OCI-LY7 (cell line): ENCODE measurements at regions of chr14 and their contacts with region 1.

Region 1: DNA sequence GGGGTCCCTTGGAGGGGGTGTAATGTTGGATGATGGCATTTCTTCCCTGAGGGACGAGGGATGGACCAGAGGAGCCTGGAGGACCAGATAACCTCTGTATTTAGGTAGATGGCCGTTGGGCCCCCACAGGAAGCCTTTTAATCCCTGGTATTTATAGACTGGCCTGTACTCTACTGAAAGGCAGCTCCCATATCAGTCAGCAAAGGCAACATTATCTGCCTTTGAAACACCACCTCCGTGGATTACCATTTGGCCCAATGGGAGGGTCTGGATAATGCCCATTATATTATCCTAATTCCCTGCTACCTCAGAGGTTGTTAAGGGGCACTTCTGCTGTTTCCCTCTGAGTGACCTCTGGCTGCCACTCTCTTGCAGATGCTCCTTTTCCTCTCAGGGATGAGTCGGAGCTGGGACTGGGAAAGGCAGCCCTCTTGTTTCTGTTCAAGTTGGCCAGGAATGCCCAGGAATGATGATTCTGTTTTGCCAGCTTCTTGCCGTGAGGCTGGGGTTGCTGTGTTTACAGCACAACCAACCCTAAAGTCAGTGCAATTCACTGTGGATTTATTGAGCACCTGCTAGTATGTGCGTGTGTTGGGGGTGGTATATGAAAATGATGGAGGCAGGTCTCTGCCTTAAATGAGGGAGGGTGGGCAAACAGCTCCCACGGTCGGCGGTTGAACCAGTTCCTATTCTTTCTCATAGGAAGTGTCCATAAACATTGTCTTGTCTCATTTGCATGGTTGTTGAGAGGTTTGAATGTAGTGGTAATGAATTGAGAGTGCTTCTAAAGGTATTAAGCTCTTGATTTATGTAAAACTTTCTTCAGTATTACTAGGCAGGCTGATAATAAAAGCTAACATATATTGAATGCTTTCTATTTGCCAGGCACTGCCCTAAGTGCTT is 18.1 kb downstream of the SUSD6 start:
- DNase-seq: peak; percentile 65
- H3K4me3 ChIP-seq: peak overlapping the region; percentile 57
- H3K27ac ChIP-seq: peak overlapping the region; percentile 65
- H3K4me1 ChIP-seq: peaks cover 100% of the 10 kb centered on the region
- CTCF ChIP-seq: no peak

Region 2: GRCh38 chr14:69643443-69644164 is 14.1 kb after region 1 on chr14:
- CTCF ChIA-PET with region 1: interaction called, 3 read pairs
- POLR2A ChIA-PET with region 1: interaction called, 14 read pairs
- intact Hi-C with region 1: no loop called
- DNase-seq: no peak
- H3K4me3 ChIP-seq: no peak overlapping the region
- H3K27ac ChIP-seq: no peak overlapping the region
- H3K4me1 ChIP-seq: peaks cover 43% of the 10 kb centered on the region
- CTCF ChIP-seq: no peak

Region 3: GRCh38 chr14:69648477-69649451 is 19.3 kb after region 1 on chr14:
- CTCF ChIA-PET with region 1: interaction called, 3 read pairs
- POLR2A ChIA-PET with region 1: interaction called, 14 read pairs
- intact Hi-C with region 1: no loop called
- DNase-seq: peak; percentile 50
- H3K4me3 ChIP-seq: peak overlapping the region; percentile 48
- H3K27ac ChIP-seq: peak overlapping the region; percentile 58
- H3K4me1 ChIP-seq: peaks cover 92% of the 10 kb centered on the region
- CTCF ChIP-seq: no peak